OCI-LY7 (cell line): ENCODE measurements at regions of chr11 and their contacts with region 1.

Region 1: DNA sequence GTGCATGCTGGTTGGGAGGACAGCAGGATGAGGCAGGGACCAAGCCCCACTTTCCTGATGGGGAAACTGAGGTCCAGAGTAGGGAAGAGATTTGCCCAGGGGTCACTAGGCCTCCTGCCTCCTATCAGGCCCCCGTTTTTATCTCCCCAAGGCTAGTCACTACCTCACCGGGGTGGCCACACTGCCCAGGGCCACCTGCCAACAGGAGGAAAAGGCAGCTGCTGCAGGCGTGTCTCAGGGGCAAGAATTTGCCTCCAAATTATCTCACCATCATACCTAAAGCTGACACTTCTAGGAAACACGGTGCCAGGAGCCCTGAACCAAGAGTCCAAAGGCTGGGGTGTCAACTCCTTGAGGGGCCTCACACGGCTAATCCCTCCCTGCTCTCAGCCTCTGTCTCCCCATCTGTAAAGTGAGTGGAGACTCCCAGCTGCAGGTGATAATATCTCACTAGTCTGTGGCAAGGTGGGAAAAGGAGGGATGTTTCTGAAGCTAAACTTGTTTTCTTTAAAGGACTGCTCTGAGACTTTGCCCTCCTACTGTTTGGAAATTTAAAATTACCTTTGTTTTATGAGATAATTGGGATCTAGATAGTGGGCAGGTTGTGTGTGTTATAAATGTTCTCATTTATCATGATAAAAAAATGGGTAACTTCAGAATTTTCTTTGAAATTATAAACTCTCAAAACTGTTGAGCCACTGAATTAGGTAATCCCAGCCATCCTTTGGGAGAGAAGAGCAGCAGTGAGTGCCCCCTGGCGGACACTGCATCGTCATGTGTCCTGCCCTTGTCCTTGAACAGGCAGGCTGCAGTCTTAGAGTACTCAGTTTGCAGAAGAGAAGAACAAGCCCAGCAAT is 60.0 kb downstream of the MYO7A start:
- DNase-seq: peak; percentile 68
- H3K4me3 ChIP-seq: no peak overlapping the region
- H3K27ac ChIP-seq: no peak overlapping the region
- H3K4me1 ChIP-seq: no peaks in the 10 kb centered on the region
- CTCF ChIP-seq: peak; percentile 95

Region 2: DNA sequence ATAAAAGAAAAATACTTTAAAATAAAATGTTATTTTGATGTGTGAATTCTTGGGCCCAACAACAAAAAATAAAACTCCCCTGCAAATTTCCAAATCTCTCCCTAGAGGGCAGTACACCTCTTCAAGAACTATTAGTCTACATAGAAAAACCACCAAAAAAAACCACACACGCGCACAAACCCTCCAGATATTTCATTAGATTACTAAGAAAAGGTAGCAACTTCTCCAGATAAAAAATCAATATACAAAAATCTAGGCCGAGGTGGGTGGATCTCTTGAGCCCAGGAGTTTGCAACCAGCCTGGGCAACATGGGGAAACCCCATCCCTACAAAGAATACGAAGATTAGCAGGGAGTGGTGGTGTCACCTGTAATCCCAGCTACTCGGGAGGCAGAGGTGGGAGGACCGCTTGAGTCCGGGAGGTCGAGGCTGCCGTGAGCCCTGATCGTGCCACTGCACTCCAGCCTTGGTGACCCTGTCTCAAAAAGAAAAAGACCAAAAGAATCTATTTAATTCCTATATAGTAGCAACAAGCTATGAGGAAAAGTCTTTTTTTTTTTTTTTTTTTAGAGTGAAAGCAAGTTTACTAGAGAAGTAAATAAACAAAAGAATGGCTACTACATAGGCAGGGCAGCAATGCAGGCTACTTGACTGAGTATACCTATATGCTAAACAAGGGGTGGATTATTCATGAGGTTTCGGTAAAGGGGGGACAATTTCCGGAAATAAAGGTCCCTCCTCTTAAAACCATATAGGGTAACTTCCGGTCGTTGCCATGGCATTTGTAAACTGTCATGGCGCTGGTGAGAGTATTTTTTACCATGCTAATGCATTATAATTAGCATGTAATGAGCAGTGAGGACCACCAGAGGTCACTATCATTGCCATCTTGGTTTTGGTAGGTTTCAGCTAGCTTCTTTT is 140.7 kb before region 1 on chr11:
- CTCF ChIA-PET with region 1: interaction called, 3 read pairs
- POLR2A ChIA-PET with region 1: no interaction called
- intact Hi-C with region 1: loop called (anchors 2 kb)
- DNase-seq: peak; percentile 94
- H3K4me3 ChIP-seq: peak overlapping the region; percentile 50
- H3K27ac ChIP-seq: no peak overlapping the region
- H3K4me1 ChIP-seq: peaks cover 6% of the 10 kb centered on the region
- CTCF ChIP-seq: peak; percentile 85

Region 3: GRCh38 chr11:77127232-77127911 is 60.6 kb before region 1 on chr11:
- CTCF ChIA-PET with region 1: no interaction called
- POLR2A ChIA-PET with region 1: no interaction called
- intact Hi-C with region 1: loop called (anchors 1 kb)
- DNase-seq: peak; percentile 30
- H3K4me3 ChIP-seq: no peak overlapping the region
- H3K27ac ChIP-seq: no peak overlapping the region
- H3K4me1 ChIP-seq: peaks cover 11% of the 10 kb centered on the region
- CTCF ChIP-seq: peak; percentile 91